Common myeloid progenitor, CD34-positive (primary cell): ENCODE measurements at regions of chr13 and their contacts with region 1.

Region 1: GRCh38 chr13:89695343-89696257 is 1651.9 kb upstream of the MIR17HG start:
- DNase-seq: peak; percentile 42 to 70 (median 56)
- H3K4me3 ChIP-seq: no peak overlapping the region
- H3K27ac ChIP-seq: no peak overlapping the region
- H3K4me1 ChIP-seq: no peaks in the 10 kb centered on the region
- H3K27me3 ChIP-seq: no peaks in the 10 kb centered on the region

Region 2: GRCh38 chr13:89361909-89362308 is 333.7 kb before region 1 on chr13:
- CTCF ChIA-PET with region 1: interaction called, 36 read pairs
- POLR2A ChIA-PET with region 1: no interaction called
- DNase-seq: peak; percentile 28 to 49 (median 30)
- H3K4me3 ChIP-seq: no peak overlapping the region
- H3K27ac ChIP-seq: no peak overlapping the region
- H3K4me1 ChIP-seq: no peaks in the 10 kb centered on the region
- H3K27me3 ChIP-seq: no peaks in the 10 kb centered on the region